Mammary epithelial cell (primary cell): ENCODE measurements at regions of chr5 and their contacts with region 1.

Region 1: GRCh38 chr5:148998174-148998797 is 64.6 kb downstream of the SH3TC2 start:
- DNase-seq: peak; percentile 74
- H3K4me3 ChIP-seq: no peak overlapping the region
- H3K27ac ChIP-seq: no peak overlapping the region
- H3K4me1 ChIP-seq: peaks cover 31% of the 10 kb centered on the region
- H3K27me3 ChIP-seq: no peaks in the 10 kb centered on the region
- CTCF ChIP-seq: peak; percentile 65 to 67

Region 2: DNA sequence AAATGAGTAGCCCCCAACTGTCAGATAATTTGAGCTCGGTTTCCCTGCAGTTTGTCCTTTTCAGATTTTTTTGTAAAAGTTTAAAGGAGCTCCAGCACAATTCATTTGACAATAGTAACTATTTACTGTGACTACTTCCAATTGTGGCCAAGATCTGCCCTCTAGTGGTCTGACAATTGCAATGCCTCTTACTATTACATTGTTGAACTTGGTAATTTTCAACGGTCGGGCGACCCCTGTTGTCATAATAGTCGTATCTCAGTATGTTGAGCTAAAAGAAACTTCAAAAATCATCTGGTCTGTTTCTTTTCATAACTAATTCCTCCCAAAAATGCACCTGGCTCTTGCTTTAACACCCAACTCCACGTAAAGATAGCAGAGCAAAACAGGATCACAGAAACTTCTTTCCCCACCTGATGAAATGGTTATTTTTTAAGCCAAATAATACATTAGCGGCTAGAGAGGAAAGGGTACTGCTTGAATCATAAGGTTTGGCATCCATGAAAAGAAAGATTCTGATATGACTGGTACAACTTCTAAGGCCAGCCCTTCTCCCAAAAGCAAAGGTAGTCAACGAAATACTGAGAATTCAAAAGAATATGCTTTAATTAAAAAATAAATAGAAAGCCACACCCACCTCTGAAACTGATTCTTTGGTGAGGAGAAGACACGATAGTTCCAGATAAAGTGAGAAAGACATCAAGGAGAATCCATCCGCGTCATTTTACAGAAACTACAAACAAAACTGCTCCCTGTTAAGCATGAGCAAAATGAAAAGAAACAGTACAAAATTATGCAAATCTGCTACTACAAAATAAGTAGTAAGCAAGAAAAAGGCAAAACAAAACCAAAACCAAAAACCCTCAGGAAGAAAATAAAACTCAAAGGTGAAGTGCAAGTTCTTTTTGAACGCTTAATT is 267.1 kb before region 1 on chr5:
- CTCF ChIA-PET with region 1: no interaction called
- dilution Hi-C with region 1: no loop called
- in situ Hi-C with region 1: loop called (anchors 10 kb)
- intact Hi-C with region 1: loop called (anchors 1 kb)
- DNase-seq: peak; percentile 64
- H3K4me3 ChIP-seq: peak overlapping the region in 1 of 3 experiments; percentile 4
- H3K27ac ChIP-seq: no peak overlapping the region
- H3K4me1 ChIP-seq: peaks cover 6% of the 10 kb centered on the region
- H3K27me3 ChIP-seq: no peaks in the 10 kb centered on the region
- CTCF ChIP-seq: peak; percentile 76 to 98

Region 3: GRCh38 chr5:148750614-148751013 is 247.7 kb before region 1 on chr5:
- CTCF ChIA-PET with region 1: no interaction called
- dilution Hi-C with region 1: loop called (anchors 5 kb)
- in situ Hi-C with region 1: no loop called
- intact Hi-C with region 1: no loop called
- DNase-seq: no peak
- H3K4me3 ChIP-seq: no peak overlapping the region
- H3K27ac ChIP-seq: no peak overlapping the region
- H3K4me1 ChIP-seq: peaks cover 5% of the 10 kb centered on the region
- H3K27me3 ChIP-seq: no peaks in the 10 kb centered on the region
- CTCF ChIP-seq: no peak

Region 4: GRCh38 chr5:148826053-148826738 is 172.1 kb before region 1 on chr5 and contains the start of gene ADRB2:
- CTCF ChIA-PET with region 1: no interaction called
- dilution Hi-C with region 1: no loop called
- in situ Hi-C with region 1: loop called (anchors 5 to 10 kb)
- intact Hi-C with region 1: loop called (anchors 1 kb)
- DNase-seq: peak; percentile 99
- H3K4me3 ChIP-seq: peak within 1 kb of the TSS; percentile 69 to 81 (median 81)
- H3K27ac ChIP-seq: peak within 1 kb of the TSS; percentile 76
- H3K4me1 ChIP-seq: peaks cover 33% of the 10 kb centered on the region
- H3K27me3 ChIP-seq: no peaks in the 10 kb centered on the region
- CTCF ChIP-seq: peak in 1 of 2 donors; percentile 23
- total RNA-seq, gene ADRB2: 4.8 to 14.8 TPM

Region 5: GRCh38 chr5:149035372-149035790 is 37.1 kb after region 1 on chr5:
- CTCF ChIA-PET with region 1: interaction called, 3 read pairs
- dilution Hi-C with region 1: loop called (anchors 5 kb)
- in situ Hi-C with region 1: no loop called
- intact Hi-C with region 1: loop called (anchors 1 kb)
- DNase-seq: peak; percentile 61
- H3K4me3 ChIP-seq: no peak overlapping the region
- H3K27ac ChIP-seq: no peak overlapping the region
- H3K4me1 ChIP-seq: peaks cover 25% of the 10 kb centered on the region
- H3K27me3 ChIP-seq: no peaks in the 10 kb centered on the region
- CTCF ChIP-seq: peak; percentile 88 to 90